ENCODE measurements at regions of chr3 and their contacts with region 1.

Region 1: GRCh38 chr3:37210230-37210629 is 35.8 kb upstream of the LRRFIP2 start:
- DNase-seq: no peak
- H3K4me3 ChIP-seq: no peak overlapping the region
- H3K27ac ChIP-seq: no peak overlapping the region
- H3K4me1 ChIP-seq: peaks cover 0 to 8% (median 3%) of the 10 kb centered on the region in 4 donors
- H3K27me3 ChIP-seq: no peaks in the 10 kb centered on the region
- CTCF ChIP-seq: no peak
- EP300 ChIP-seq: no peak
- POLR2A ChIP-seq: no peak

Region 2: DNA sequence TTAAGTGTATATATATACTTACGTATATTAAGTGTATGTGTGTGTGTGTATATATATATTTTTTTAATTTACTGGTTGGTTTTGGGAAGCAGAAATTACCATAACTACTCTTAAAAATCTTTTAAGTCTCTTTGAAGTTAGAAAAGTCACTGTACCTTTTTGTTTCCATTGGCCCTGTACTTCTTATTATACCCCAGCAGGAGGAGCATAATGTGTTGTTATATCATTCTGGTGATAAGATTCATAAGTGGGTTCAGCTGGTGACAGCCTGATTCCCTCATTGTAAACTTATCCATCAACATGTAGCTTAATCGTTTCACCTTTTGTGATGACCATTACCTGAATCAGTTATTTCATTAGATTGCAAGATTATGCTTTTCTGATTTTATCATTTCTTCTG is 186.1 kb before region 1 on chr3:
- intact Hi-C with region 1: loop called (anchors 10 kb)
- DNase-seq: no peak
- H3K4me3 ChIP-seq: no peak overlapping the region
- H3K27ac ChIP-seq: no peak overlapping the region
- H3K4me1 ChIP-seq: peaks cover 0 to 11% (median 4%) of the 10 kb centered on the region in 4 donors
- H3K27me3 ChIP-seq: no peaks in the 10 kb centered on the region
- CTCF ChIP-seq: peak in 5 of 7 experiments; percentile 25 to 59 (median 46)
- EP300 ChIP-seq: no peak
- POLR2A ChIP-seq: no peak

Region 3: DNA sequence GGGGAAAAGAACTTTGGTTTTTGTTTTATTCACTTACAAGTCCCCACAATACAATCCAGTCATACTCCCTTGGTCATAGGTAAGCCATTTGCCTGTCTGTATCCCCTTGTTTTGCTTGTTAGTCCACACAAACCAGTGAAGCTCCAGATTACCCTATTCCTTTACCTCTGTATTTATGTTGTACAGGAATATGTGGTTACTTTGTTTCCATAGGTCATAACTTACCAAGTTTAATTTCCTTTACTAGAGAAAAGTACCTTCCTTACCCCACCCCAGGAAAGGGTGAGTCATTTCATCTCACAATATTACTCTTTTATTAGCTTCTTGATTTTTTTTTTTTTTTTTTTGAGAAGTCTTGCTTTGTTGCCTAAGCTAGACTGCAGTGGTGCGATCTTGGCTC is 77.5 kb after region 1 on chr3:
- intact Hi-C with region 1: no loop called
- DNase-seq: no peak
- H3K4me3 ChIP-seq: no peak overlapping the region
- H3K27ac ChIP-seq: no peak overlapping the region
- H3K4me1 ChIP-seq: peaks cover 0 to 21% (median 7%) of the 10 kb centered on the region in 4 donors
- H3K27me3 ChIP-seq: no peaks in the 10 kb centered on the region
- CTCF ChIP-seq: no peak
- EP300 ChIP-seq: no peak
- POLR2A ChIP-seq: no peak

Measured in stomach (tissue), 19 donors.